Endothelial cell of umbilical vein (primary cell): ENCODE measurements at regions of chr4 and their contacts with region 1.

Region 1: DNA sequence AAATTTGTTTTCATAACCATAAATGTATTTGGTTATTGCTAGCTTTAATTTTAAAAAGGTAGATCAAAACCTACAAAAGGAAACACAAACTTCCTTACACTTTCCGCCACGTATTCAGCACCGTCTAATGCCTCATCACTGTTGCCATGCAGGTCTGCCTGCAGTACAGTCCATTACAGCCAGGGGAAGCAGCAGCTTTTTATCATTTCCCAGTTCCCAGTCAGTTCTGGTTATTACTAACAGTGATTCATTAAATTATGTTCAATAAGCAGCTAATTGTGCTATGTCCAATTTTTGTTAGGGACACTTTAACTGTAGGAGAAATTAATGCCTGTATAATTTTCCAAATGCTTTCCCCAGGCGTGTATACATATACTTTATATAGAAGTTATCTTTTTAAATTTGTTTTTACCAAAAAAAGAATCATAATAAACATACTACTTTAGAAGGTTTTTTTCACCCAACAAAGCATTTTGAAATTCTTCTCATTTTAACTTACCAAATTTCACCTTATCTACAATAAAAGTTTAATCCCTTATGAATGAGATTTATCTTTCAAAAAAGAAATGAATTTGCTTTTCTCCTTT is 93.3 kb downstream of the ANXA3 start:
- DNase-seq: peak; percentile 90
- H3K4me3 ChIP-seq: peak overlapping the region in 1 of 3 experiments; percentile 61
- H3K27ac ChIP-seq: peak overlapping the region; percentile 92
- H3K4me1 ChIP-seq: peaks cover 41% of the 10 kb centered on the region
- H3K27me3 ChIP-seq: no peaks in the 10 kb centered on the region
- CTCF ChIP-seq: peak; percentile 79 to 86
- POLR2A ChIP-seq: no peak

Region 2: DNA sequence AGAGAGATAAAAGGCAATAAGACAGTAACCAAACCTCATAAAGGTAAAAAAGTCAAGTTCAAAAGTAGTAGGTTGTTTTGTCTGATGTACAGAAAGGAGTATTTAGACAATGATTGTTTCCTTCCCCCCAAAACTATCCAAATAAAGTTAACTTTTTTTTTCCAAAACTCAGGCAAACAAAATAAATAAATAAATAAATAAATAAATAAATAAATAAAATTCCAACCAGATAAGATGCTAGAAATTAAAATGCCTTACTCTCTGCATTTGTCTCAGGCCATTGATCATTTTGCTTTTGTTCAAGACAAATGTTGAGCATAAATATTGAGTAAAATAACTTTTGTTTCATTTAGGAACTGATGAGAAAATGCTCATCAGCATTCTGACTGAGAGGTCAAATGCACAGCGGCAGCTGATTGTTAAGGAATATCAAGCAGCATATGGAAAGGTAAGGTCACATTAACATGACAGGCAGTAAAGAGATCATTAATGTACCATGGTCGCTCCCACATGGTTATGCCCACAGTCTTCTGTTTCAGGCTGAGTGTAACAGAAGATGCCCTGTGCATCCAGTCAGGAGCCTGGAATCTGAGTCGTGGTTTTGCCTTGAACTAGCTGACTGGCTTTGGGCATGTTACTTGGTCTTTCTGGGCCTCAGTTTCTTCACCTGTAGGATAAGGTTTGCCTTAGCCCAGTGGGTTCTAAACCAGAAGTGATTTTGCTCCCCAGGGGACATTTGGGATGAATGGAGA is 66.0 kb before region 1 on chr4:
- CTCF ChIA-PET with region 1: no interaction called
- POLR2A ChIA-PET with region 1: no interaction called
- dilution Hi-C with region 1: no loop called
- intact Hi-C with region 1: no loop called
- DNase-seq: no peak
- H3K4me3 ChIP-seq: no peak overlapping the region
- H3K27ac ChIP-seq: no peak overlapping the region
- H3K4me1 ChIP-seq: no peaks in the 10 kb centered on the region
- H3K27me3 ChIP-seq: no peaks in the 10 kb centered on the region
- CTCF ChIP-seq: no peak
- POLR2A ChIP-seq: no peak

Region 3: DNA sequence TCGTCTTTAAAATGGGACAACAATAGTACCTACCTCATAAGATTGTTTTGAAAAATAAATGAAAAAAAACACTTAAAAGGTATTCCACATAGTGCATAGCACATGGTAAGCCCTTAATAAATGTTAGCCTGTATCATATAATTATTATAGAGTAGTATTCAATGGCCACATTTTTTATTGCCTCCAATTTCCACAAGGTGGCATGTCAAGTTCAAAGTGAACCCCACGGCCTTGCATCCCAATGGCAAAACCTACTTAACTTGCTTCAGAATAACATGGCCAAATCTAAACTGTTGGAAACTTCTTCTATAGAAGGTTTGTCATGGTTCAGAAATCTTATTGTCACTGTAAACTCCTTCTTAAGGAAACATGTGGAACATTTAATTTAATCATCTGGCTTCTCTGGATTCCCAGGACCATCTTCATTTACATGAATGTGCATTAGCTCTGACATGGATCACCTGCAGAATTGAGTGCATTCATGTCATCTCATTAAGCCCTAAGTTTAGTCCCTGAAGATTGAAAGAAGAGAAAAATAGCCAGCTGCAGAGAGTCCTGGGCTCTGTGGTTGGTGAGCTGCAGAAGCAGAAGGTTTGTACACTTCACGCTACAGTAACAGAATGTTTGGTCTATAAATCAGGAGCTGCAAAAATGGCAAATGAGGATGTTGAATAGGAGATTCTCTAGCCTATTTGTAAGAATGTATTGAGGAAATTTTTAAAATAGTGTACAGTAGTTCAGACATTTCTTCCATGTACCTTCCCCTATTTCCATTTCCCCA is 32.2 kb before region 1 on chr4:
- CTCF ChIA-PET with region 1: interaction called, 8 read pairs
- POLR2A ChIA-PET with region 1: no interaction called
- dilution Hi-C with region 1: no loop called
- intact Hi-C with region 1: loop called (anchors 1 kb)
- DNase-seq: peak; percentile 62
- H3K4me3 ChIP-seq: no peak overlapping the region
- H3K27ac ChIP-seq: no peak overlapping the region
- H3K4me1 ChIP-seq: no peaks in the 10 kb centered on the region
- H3K27me3 ChIP-seq: no peaks in the 10 kb centered on the region
- CTCF ChIP-seq: peak; percentile 45 to 46
- POLR2A ChIP-seq: no peak

Region 4: DNA sequence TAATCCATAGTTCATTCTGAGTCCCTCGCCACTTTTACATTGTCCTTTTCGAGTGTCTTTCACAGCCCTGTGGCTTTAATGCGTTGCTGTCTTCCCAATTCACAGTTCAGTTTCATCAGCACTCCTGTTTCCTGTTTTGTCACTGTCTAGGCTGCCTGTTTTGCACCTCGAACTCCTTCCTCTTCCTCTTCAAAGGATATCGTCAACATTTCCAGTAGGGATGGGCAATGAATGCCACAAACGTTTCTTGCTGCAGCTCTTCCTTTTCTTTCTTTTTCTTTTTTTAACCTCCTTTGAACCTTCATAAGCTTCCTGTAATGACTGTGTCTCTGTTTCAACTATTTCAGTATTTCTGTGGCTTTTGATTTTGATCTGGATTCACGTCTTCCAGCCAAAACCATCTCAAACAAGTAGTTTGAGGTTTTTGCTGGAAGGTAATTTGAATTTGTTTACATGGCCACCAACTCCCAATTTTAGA is 12.2 kb after region 1 on chr4:
- CTCF ChIA-PET with region 1: interaction called, 75 read pairs
- POLR2A ChIA-PET with region 1: interaction called, 6 read pairs
- dilution Hi-C with region 1: no loop called
- intact Hi-C with region 1: loop called (anchors 1 kb)
- DNase-seq: peak; percentile 81
- H3K4me3 ChIP-seq: peak overlapping the region in 1 of 3 experiments; percentile 33
- H3K27ac ChIP-seq: peak overlapping the region; percentile 59
- H3K4me1 ChIP-seq: peaks cover 77% of the 10 kb centered on the region
- H3K27me3 ChIP-seq: no peaks in the 10 kb centered on the region
- CTCF ChIP-seq: no peak
- POLR2A ChIP-seq: peak; percentile 53

Region 5: DNA sequence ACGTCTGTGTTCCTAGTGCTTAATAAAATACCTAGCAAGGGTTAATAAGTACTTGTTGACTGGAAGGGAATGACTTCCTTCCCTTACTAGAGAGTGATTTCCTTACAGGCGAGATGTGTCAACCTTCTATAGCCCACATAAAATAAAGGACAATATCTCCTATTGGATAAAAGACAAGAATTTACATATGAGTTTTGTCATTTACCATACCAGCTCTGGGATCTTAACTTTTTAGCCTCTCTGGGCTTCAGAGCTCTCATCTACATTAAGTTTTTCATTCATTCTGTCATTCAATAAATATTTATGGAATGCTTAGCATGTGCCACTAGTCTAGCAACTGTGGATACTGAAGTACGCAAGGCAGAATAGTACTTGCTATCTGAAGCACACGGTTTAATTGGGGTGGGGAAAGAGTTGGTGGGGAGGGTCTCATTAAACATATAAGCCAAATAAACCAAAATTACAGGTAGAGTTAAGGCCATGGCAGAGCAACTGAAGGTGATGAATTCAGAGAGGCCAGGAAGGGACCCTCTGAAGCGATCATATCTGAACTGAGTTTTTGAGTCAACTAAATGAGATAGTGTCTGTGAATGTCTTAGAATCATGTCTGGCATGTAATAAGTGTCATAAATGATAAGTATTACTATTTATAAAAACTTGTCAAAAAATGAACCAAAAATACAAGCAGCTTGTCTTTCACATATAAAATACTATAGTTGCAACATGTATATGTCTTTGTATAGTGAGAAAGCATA is 39.7 kb after region 1 on chr4:
- CTCF ChIA-PET with region 1: interaction called, 13 read pairs
- POLR2A ChIA-PET with region 1: no interaction called
- dilution Hi-C with region 1: no loop called
- intact Hi-C with region 1: loop called (anchors 1 kb)
- DNase-seq: peak; percentile 45
- H3K4me3 ChIP-seq: no peak overlapping the region
- H3K27ac ChIP-seq: no peak overlapping the region
- H3K4me1 ChIP-seq: peaks cover 11% of the 10 kb centered on the region
- H3K27me3 ChIP-seq: no peaks in the 10 kb centered on the region
- CTCF ChIP-seq: no peak
- POLR2A ChIP-seq: no peak

Region 6: GRCh38 chr4:78864405-78865024 is 219.7 kb after region 1 on chr4:
- CTCF ChIA-PET with region 1: interaction called, 53 read pairs
- POLR2A ChIA-PET with region 1: no interaction called
- dilution Hi-C with region 1: no loop called
- intact Hi-C with region 1: loop called (anchors 1 kb)
- DNase-seq: peak; percentile 85
- H3K4me3 ChIP-seq: no peak overlapping the region
- H3K27ac ChIP-seq: no peak overlapping the region
- H3K4me1 ChIP-seq: no peaks in the 10 kb centered on the region
- H3K27me3 ChIP-seq: no peaks in the 10 kb centered on the region
- CTCF ChIP-seq: peak; percentile 41 to 42
- POLR2A ChIP-seq: no peak

Region 7: GRCh38 chr4:79450053-79450452 is 805.2 kb after region 1 on chr4:
- CTCF ChIA-PET with region 1: no interaction called
- POLR2A ChIA-PET with region 1: no interaction called
- dilution Hi-C with region 1: no loop called
- intact Hi-C with region 1: no loop called
- DNase-seq: no peak
- H3K4me3 ChIP-seq: no peak overlapping the region
- H3K27ac ChIP-seq: no peak overlapping the region
- H3K4me1 ChIP-seq: no peaks in the 10 kb centered on the region
- H3K27me3 ChIP-seq: no peaks in the 10 kb centered on the region
- CTCF ChIP-seq: no peak
- POLR2A ChIP-seq: no peak